ENCODE measurements at regions of chr11 and their contacts with region 1.

Region 1: GRCh38 chr11:12888525-12889158 is 120.5 kb upstream of the RASSF10 start:
- DNase-seq: peak; percentile 86
- H3K4me3 ChIP-seq: peak overlapping the region; percentile 5
- H3K27ac ChIP-seq: peak overlapping the region; percentile 76
- H3K4me1 ChIP-seq: peaks cover 69% of the 10 kb centered on the region
- H3K27me3 ChIP-seq: no peaks in the 10 kb centered on the region
- CTCF ChIP-seq: peak; percentile 83

Region 2: DNA sequence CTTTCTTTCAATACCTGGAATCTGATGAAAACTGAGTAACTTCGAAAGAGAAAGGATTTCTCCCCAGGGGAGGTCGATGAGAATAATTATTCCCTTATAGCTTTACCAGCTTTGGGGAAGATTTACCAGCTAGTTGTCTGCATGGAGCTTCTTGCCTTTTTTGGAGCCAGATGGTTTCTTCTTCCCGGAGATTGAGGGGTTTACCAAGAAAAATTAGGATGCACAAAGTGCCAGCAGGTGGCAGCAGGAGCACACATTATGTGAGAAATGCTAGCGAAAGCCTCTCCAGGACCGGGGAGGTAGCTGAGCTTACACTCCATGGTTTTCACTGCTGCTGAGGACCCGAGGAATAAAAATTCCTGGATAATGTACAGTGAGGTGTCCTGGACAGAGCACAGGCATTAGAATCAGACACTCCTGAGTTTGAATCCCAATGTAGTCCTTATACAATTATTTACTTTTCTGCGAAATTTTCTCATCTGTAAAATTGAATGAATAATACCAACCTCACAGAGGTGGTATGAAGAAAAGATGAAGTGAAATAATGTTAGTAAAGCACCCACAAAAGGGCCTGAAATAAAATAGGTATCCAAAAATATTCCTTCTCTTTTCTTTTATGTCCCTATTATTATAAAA is 557.3 kb before region 1 on chr11:
- intact Hi-C with region 1: loop called (anchors 2 kb)
- DNase-seq: peak; percentile 77
- H3K4me3 ChIP-seq: no peak overlapping the region
- H3K27ac ChIP-seq: no peak overlapping the region
- H3K4me1 ChIP-seq: peaks cover 4% of the 10 kb centered on the region
- H3K27me3 ChIP-seq: no peaks in the 10 kb centered on the region
- CTCF ChIP-seq: peak; percentile 83

Region 3: GRCh38 chr11:12599408-12600143 is 289.1 kb before region 1 on chr11:
- intact Hi-C with region 1: loop called (anchors 10 kb)
- DNase-seq: peak; percentile 33
- H3K4me3 ChIP-seq: no peak overlapping the region
- H3K27ac ChIP-seq: no peak overlapping the region
- H3K4me1 ChIP-seq: peaks cover 42% of the 10 kb centered on the region
- H3K27me3 ChIP-seq: no peaks in the 10 kb centered on the region
- CTCF ChIP-seq: peak; percentile 72

Region 4: GRCh38 chr11:12673924-12674570 is 214.6 kb before region 1 on chr11 and contains the start of gene TEAD1:
- intact Hi-C with region 1: loop called (anchors 10 kb)
- DNase-seq: peak; percentile 96
- H3K4me3 ChIP-seq: peak within 1 kb of the TSS; percentile 84
- H3K27ac ChIP-seq: peak within 1 kb of the TSS; percentile 98
- H3K4me1 ChIP-seq: peaks cover 45% of the 10 kb centered on the region
- H3K27me3 ChIP-seq: no peaks in the 10 kb centered on the region
- CTCF ChIP-seq: no peak
- total RNA-seq, gene TEAD1: 121 TPM

Region 5: DNA sequence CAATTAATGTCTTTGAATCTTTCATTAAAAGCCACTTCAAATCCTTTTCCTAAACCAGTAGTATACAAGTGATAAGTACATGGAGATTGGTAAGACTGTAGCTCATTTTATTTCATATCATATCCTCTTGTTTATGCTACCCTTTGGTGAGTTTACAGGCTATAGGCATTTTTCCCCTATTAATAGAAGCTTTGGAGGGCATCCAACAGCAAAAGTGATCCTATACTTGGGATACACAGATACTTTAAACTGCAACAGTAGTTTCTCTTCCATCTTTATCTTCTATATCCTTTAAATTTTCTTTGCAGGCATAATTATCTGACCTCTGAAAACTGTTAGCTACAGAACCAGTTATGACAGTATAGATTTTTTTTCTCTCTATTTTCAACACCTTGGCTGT is 959.4 kb after region 1 on chr11:
- intact Hi-C with region 1: no loop called
- DNase-seq: no peak
- H3K4me3 ChIP-seq: no peak overlapping the region
- H3K27ac ChIP-seq: no peak overlapping the region
- H3K4me1 ChIP-seq: no peaks in the 10 kb centered on the region
- H3K27me3 ChIP-seq: peaks cover 38% of the 10 kb centered on the region
- CTCF ChIP-seq: no peak